B cell (primary cell): ENCODE measurements at regions of chr7 and their contacts with region 1.

Region 1: DNA sequence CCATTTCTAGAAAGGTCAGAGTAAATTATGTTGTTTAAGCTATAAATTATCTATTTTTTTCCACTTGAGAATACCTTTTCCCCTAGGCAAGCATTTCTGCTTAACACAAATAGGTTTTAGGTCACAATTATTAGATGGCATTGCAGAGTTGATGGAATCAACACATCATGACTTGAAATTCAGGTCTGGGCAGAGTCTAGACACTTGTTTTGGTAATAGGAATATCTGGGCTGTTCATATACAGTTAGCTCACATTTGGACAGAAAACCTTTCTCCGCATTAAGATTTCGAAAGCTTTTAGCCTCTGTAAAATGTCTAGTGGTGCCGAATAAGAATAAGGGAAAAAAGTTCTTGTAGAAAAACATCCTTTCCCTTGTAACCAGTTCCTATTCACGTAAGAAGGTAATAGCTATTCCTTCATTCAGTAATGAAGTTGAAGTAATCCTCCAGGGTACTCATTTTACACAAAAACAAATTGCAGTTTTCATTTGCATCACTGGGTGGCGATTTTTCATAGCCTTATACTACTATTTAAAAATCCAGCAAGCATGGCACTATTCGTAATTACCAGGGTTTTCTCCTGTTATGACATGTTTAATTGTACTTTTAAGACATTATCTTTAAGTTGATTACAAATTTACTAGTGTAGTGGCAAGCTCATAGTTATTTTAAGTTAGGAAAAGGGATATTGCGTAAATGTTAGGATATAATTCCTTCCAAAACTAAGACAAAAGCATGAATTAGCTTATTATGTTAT is 37.0 kb downstream of the RPA3 start:
- DNase-seq: peak; percentile 78
- ATAC-seq: peak; percentile 84
- H3K4me3 ChIP-seq: no peak overlapping the region
- H3K4me3 Mint-ChIP-seq: no peak overlapping the region
- H3K27ac ChIP-seq: peak overlapping the region; percentile 48 to 54
- H3K27ac Mint-ChIP-seq: peak overlapping the region; percentile 89
- H3K4me1 ChIP-seq: peaks cover 3 to 11% of the 10 kb centered on the region in 2 donors
- H3K4me1 Mint-ChIP-seq: peaks cover 28% of the 10 kb centered on the region
- H3K27me3 ChIP-seq: no peaks in the 10 kb centered on the region
- H3K27me3 Mint-ChIP-seq: no peaks in the 10 kb centered on the region
- CTCF ChIP-seq: peak; percentile 81

Region 2: DNA sequence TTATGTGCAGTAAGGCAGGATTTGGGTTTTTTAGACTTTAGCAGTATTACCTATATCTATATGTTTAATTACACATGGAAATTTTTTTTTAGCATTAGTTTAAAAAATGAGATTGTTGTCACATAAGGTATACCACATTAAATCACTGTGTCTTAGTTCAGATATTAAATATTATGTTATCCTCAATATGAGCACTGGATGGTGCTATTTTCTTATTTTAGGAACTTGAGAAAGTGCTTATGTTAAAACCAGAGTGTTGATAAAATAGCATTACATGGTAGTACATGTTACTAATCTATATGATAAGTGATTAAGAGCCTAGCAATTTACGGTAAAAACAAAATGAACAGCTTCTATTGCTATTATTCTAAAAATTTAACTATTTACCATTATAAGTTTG is 85.9 kb before region 1 on chr7:
- CTCF ChIA-PET with region 1: interaction called, 14 read pairs
- POLR2A ChIA-PET with region 1: no interaction called
- intact Hi-C with region 1: loop called (anchors 5 kb)
- DNase-seq: peak; percentile 58
- ATAC-seq: peak; percentile 33
- H3K4me3 ChIP-seq: no peak overlapping the region
- H3K4me3 Mint-ChIP-seq: no peak overlapping the region
- H3K27ac ChIP-seq: no peak overlapping the region
- H3K27ac Mint-ChIP-seq: no peak overlapping the region
- H3K4me1 ChIP-seq: no peaks in the 10 kb centered on the region
- H3K4me1 Mint-ChIP-seq: no peaks in the 10 kb centered on the region
- H3K27me3 ChIP-seq: no peaks in the 10 kb centered on the region
- H3K27me3 Mint-ChIP-seq: no peaks in the 10 kb centered on the region
- CTCF ChIP-seq: peak; percentile 75

Region 3: GRCh38 chr7:7719236-7719635 is 37.9 kb after region 1 on chr7:
- CTCF ChIA-PET with region 1: interaction called, 13 read pairs
- POLR2A ChIA-PET with region 1: no interaction called
- intact Hi-C with region 1: no loop called
- DNase-seq: no peak
- ATAC-seq: peak; percentile 58
- H3K4me3 ChIP-seq: no peak overlapping the region
- H3K4me3 Mint-ChIP-seq: no peak overlapping the region
- H3K27ac ChIP-seq: no peak overlapping the region
- H3K27ac Mint-ChIP-seq: no peak overlapping the region
- H3K4me1 ChIP-seq: no peaks in the 10 kb centered on the region
- H3K4me1 Mint-ChIP-seq: peaks cover 11% of the 10 kb centered on the region
- H3K27me3 ChIP-seq: no peaks in the 10 kb centered on the region
- H3K27me3 Mint-ChIP-seq: no peaks in the 10 kb centered on the region
- CTCF ChIP-seq: no peak

Region 4: DNA sequence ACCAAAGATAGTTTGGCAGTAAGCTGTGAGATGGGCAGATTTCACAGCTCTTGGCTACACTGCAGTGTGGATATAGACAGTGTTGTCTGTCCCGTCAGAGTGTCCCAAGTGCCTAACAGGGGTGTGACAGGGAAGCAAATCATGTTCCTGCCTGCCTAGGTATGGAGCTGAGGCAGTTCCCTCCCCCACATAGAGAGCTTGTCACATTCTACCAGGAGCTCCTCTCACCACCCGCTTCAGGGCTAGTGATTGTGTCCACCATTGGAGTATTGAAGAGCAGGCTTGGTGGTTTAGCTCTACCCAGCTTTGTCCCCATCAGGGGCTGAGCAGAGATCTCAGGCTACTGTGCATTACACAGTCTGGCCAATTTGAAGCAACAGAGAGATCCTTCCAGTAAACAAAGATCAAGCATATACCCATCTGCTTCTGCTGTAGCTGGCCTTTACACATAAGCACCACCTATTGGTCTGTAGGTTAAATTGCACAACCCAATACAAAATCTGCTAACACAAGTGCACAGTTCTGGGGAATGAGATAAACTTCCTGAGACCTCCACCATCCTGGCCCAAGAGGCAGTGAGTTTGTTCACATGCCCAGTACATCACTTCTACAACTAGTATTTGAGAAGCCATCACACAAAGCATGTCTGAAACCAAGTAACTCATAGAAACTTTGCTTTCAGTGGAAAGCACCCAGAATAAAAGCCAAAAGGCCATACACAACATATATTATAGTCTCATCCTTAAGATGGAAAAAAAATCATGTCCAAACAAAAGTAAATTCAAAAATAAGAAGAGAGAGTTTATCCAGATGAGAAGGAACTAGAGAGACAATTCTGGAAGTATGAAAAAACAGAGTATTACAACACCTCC is 354.5 kb after region 1 on chr7:
- CTCF ChIA-PET with region 1: interaction called, 41 read pairs
- POLR2A ChIA-PET with region 1: no interaction called
- intact Hi-C with region 1: loop called (anchors 1 kb)
- DNase-seq: peak; percentile 54
- ATAC-seq: peak; percentile 78
- H3K4me3 ChIP-seq: no peak overlapping the region
- H3K4me3 Mint-ChIP-seq: no peak overlapping the region
- H3K27ac ChIP-seq: peak overlapping the region in 1 of 2 donors; percentile 20
- H3K27ac Mint-ChIP-seq: peak overlapping the region; percentile 77
- H3K4me1 ChIP-seq: peaks cover 3 to 5% of the 10 kb centered on the region in 2 donors
- H3K4me1 Mint-ChIP-seq: peaks cover 14% of the 10 kb centered on the region
- H3K27me3 ChIP-seq: no peaks in the 10 kb centered on the region
- H3K27me3 Mint-ChIP-seq: no peaks in the 10 kb centered on the region
- CTCF ChIP-seq: peak; percentile 75

Region 5: DNA sequence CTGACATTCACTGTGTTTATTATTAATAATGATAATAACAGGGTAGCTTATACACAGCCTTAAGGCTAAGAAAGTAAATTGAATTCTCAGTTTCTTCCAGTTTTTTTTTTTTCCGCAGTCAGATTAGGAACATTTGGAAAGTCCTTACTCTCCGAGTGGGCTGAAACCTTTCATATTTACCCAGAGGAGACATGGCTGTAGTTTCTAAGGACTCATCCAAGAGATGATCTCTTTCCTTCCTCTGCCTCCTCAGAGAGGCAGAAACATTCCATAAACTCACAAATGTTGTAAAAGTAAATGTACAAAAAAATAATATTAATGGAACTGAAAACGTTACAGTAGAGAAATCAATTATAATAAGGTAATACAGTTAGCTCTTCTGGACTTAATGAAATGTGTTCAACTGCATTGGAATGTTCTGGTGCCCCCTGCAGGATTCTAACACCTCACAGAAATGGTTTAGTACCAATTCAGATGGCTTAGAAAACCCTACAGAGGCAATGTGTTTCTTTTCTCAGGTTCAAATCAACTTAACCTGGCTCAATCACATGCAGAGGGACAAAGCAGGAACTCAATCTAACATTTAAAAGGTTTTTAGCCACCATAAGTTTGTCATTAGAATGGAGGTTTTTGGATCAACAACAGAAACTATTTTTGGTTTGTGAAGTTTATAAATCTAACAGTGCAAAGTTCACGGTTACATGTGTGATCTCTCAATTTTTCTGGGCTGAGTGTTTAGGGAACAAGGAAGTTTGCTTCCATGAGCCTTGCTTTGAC is 508.9 kb after region 1 on chr7:
- CTCF ChIA-PET with region 1: interaction called, 119 read pairs
- POLR2A ChIA-PET with region 1: interaction called, 3 read pairs
- intact Hi-C with region 1: loop called (anchors 1 kb)
- DNase-seq: peak; percentile 78
- ATAC-seq: peak; percentile 73
- H3K4me3 ChIP-seq: no peak overlapping the region
- H3K4me3 Mint-ChIP-seq: no peak overlapping the region
- H3K27ac ChIP-seq: no peak overlapping the region
- H3K27ac Mint-ChIP-seq: no peak overlapping the region
- H3K4me1 ChIP-seq: peaks cover 17 to 18% of the 10 kb centered on the region in 2 donors
- H3K4me1 Mint-ChIP-seq: peaks cover 18% of the 10 kb centered on the region
- H3K27me3 ChIP-seq: no peaks in the 10 kb centered on the region
- H3K27me3 Mint-ChIP-seq: no peaks in the 10 kb centered on the region
- CTCF ChIP-seq: peak; percentile 91